Posterior vena cava (tissue), 2 donors: ENCODE measurements at regions of chr10 and their contacts with region 1.

Region 1: GRCh38 chr10:106775127-106775526 is 389.4 kb downstream of the SORCS1 start:
- DNase-seq: no peak

Region 2: DNA sequence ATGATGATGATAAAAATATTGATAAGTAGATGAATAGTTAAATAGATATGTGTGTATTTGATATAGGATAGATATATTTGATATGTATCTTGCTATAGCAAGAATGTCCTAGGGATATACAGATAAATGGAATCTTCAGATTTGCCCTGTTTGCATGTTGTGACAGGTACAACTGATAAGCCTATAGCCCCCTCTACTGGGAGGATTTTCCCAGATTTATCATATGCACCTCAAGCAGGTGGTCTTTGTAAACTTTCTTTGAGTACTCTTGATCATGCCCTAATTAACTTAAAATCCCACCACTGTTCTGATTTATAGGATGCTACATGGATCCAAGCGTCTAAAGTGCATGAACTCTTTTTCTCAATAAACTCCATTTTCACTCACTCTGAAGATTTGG is 1083.3 kb before region 1 on chr10:
- intact Hi-C with region 1: no loop called
- DNase-seq: no peak

Region 3: GRCh38 chr10:106661767-106662140 is 113.4 kb before region 1 on chr10:
- intact Hi-C with region 1: loop called in 1 of 2 experiments (anchors 10 kb)
- DNase-seq: no peak

Region 4: DNA sequence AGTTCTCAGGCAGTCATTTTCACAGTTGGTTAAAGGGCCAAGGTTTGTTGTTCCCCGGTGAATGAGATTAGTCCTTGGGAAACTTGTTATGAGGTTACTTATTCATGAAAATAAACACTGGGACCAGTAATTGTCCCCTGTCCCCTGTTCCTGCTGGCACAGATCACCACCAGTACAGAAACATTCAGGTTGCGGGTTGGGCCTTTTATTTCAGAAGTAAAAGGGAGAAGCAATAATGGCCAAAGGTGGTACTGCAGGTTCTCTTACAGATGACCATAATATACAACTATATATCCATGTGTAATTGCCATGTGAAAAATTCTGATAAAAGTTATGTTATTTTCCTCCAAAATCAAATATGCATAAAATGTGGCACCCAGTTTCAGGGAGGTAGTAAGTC is 52.6 kb before region 1 on chr10:
- intact Hi-C with region 1: no loop called
- DNase-seq: no peak